Activated T-helper 2 cell treated with anti-CD3 and anti-CD28 coated beads, Interferon-gamma antibody, Interleukin-2, Interleukin-4, amounts not matched to agents 10 μg/mL and 5 μg/mL and 100 μg/mL, durations not matched to agents 14 hours and 24 hours and 36 hours (primary cell): ENCODE measurements at regions of chr5 and their contacts with region 1.

Region 1: DNA sequence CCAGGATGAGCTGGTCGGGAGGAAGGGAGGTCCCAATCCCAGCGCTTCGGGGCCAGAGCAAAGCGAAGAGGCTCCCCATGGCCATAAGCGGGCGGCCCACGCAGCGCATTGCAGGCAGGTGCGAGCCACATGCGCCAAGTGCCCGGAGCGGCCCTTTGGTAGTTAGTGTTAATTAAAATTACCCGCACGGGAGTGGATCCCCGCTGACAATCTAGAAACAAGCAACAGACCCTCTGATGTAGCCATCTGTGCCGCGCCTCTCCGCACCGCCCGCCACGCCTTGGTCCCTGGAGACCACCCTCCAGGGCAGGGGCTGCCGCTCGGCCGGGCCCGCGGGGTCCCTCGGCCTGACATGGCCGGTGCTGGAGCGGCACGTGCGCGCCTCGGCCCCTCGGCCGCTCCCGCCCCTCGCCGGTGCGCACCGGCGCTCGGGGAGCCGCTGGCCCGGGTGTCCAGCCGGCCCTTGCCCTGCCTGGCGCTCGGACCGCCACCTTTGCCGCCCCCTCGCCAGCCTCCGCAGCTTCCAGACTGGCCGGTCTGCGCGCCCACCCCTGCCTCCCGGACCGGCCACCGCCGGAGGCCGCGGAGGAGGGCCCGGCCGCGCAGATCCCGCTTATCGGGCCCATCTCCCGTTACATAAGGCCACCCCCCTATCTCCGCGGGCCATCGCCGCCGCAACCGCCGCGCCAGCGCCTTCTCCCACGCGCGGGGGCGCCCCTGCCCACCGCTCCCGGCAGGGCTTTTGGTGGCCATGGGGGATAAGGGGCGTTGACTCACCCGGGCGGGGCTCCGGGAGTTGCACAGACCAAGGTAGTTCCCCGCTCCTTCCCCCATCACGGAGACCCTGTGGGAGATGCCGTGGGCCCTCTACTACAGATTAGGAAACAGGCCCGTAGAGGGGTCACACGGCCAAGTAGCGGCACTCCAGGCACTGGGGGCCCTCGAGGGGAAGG is 1.9 kb upstream of the IL13 start:
- DNase-seq: no peak
- H3K4me3 Mint-ChIP-seq: peak overlapping the region; percentile 67
- H3K27ac Mint-ChIP-seq: peak overlapping the region; percentile 65
- H3K4me1 Mint-ChIP-seq: peaks cover 52% of the 10 kb centered on the region
- H3K27me3 Mint-ChIP-seq: peaks cover 12% of the 10 kb centered on the region

Region 2: DNA sequence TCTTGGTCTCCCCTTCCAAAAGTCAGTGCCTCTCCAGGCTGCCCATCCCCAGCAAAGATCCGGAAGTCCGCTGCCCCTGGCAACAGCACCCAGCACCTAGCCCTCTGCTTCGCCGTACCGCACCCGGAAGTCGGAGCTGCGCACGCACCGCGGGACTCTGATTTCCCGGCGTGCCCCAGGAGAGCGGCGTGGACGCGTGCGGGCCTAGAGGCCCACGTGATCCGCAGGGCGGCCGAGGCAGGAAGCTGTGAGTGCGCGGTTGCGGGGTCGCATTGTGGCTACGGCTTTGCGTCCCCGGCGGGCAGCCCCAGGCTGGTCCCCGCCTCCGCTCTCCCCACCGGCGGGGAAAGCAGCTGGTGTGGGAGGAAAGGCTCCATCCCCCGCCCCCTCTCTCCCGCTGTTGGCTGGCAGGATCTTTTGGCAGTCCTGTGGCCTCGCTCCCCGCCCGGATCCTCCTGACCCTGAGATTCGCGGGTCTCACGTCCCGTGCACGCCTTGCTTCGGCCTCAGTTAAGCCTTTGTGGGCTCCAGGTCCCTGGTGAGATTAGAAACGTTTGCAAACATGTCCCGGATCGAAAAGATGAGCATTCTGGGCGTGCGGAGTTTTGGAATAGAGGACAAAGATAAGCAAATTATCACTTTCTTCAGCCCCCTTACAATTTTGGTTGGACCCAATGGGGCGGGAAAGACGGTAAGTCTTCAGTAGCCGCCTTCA is 99.2 kb before region 1 on chr5 and contains the start of gene RAD50:
- intact Hi-C with region 1: loop called (anchors 5 kb)
- DNase-seq: peak; percentile 92
- H3K4me3 Mint-ChIP-seq: peak within 1 kb of the TSS; percentile 89
- H3K27ac Mint-ChIP-seq: peak within 1 kb of the TSS; percentile 93
- H3K4me1 Mint-ChIP-seq: peaks cover 33% of the 10 kb centered on the region
- H3K27me3 Mint-ChIP-seq: no peaks in the 10 kb centered on the region
- total RNA-seq, gene RAD50: 49.2 and 55.8 TPM in 2 replicates

Region 3: DNA sequence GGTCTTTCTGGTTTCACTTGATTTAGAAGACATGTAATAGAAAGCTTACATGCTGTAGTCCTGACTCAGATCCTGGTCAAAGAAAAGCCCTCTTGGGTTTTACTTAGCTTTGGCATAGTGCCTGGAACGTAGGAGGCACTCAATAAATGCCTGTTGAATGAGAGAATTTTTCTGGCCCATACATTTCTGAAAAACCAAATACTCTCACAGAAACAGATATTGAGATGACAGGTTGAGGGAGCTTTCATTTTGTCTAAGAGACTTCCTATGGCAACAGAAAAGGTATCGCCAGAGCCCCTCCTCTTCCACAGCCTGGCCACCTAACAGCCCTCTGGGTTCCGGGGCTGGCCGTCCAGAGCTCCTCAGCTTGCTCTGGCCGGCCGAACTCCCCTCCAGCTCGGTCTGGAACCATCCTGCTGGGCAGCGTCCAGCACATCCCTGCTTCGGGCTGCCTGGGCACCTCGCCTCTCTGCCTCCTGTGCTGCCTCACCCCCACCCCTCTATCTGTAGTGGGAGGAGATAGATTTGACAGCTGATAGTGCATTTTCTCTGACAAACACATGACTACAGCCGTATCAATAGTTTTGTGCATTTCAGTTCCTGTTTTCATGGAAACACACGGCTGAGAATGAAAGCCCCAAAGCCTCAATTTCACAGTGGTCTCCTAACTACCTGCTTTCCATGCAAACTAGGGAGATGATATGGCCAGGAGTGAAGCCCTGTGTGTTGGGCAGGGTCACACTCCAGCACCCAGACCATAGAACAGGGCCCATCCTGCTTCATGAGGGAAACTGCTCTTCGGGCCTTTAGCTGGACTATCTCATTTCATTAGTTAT is 18.8 kb after region 1 on chr5:
- intact Hi-C with region 1: loop called (anchors 2 kb)
- DNase-seq: no peak
- H3K4me3 Mint-ChIP-seq: peak overlapping the region; percentile 70
- H3K27ac Mint-ChIP-seq: peak overlapping the region; percentile 95
- H3K4me1 Mint-ChIP-seq: peaks cover 40% of the 10 kb centered on the region
- H3K27me3 Mint-ChIP-seq: no peaks in the 10 kb centered on the region

Region 4: GRCh38 chr5:132688536-132689339 is 32.6 kb after region 1 on chr5:
- intact Hi-C with region 1: loop called (anchors 2 kb)
- DNase-seq: no peak
- H3K4me3 Mint-ChIP-seq: no peak overlapping the region
- H3K27ac Mint-ChIP-seq: peak overlapping the region; percentile 68
- H3K4me1 Mint-ChIP-seq: peaks cover 45% of the 10 kb centered on the region
- H3K27me3 Mint-ChIP-seq: peaks cover 1% of the 10 kb centered on the region